Activated T-helper 1 cell treated with anti-CD3 and anti-CD28 coated beads, Interleukin-12 subunit alpha, Interleukin-12 subunit beta, Interleukin-2, Interleukin-4 antibody, amounts not matched to agents 30 ng/mL and 10 ng/mL and 1 ng/mL, durations not matched to agents 14 hours and 24 hours and 36 hours (primary cell): ENCODE measurements at regions of chr16 and their contacts with region 1.

Region 1: GRCh38 chr16:80580109-80580832 is 39.5 kb downstream of the DYNLRB2 start:
- DNase-seq: peak; percentile 82
- H3K4me3 Mint-ChIP-seq: peak overlapping the region; percentile 81
- H3K27ac Mint-ChIP-seq: peak overlapping the region; percentile 100
- H3K4me1 Mint-ChIP-seq: peaks cover 55% of the 10 kb centered on the region
- H3K27me3 Mint-ChIP-seq: no peaks in the 10 kb centered on the region

Region 2: DNA sequence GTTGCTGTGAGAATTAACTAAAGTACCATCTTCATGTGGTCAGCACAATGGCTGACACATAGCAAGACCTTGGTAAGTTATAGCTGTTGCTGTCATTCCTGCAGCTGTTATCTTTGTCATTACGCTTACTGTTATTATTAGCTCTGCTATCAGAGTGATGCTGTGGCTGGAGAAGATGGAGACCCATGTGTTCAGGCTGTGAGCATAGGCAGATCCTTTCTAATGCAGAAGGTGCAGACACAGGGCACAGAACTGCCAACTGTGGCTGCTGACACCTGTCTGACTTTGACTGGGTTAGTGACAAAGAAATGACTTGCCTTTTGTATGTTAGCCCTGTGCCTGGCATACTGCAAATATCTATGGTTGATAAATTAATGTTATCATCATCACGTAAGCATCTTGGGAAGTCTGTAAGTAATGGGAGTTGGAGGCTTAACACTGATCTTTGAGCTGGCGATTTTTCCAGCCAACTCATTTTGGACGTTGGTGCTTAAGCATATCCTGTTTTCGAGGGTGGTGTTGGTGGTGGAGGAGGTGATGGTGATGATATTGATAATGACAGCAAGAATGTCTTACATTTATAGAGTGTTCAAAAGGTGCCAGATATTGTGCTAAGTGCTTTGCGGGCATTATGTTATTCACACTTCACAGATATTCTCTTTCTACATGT is 1785.6 kb before region 1 on chr16:
- intact Hi-C with region 1: loop called (anchors 5 kb)
- DNase-seq: no peak
- H3K4me3 Mint-ChIP-seq: no peak overlapping the region
- H3K27ac Mint-ChIP-seq: peak overlapping the region; percentile 77
- H3K4me1 Mint-ChIP-seq: peaks cover 35% of the 10 kb centered on the region
- H3K27me3 Mint-ChIP-seq: no peaks in the 10 kb centered on the region

Region 3: GRCh38 chr16:79316004-79316458 is 1264.2 kb before region 1 on chr16:
- intact Hi-C with region 1: loop called (anchors 5 kb)
- DNase-seq: peak; percentile 54
- H3K4me3 Mint-ChIP-seq: peak overlapping the region; percentile 64
- H3K27ac Mint-ChIP-seq: peak overlapping the region; percentile 90
- H3K4me1 Mint-ChIP-seq: peaks cover 29% of the 10 kb centered on the region
- H3K27me3 Mint-ChIP-seq: peaks cover 10% of the 10 kb centered on the region

Region 4: GRCh38 chr16:80591071-80591915 is 11.0 kb after region 1 on chr16:
- intact Hi-C with region 1: loop called (anchors 1 kb)
- DNase-seq: peak; percentile 53
- H3K4me3 Mint-ChIP-seq: peak overlapping the region; percentile 17
- H3K27ac Mint-ChIP-seq: peak overlapping the region; percentile 76
- H3K4me1 Mint-ChIP-seq: peaks cover 66% of the 10 kb centered on the region
- H3K27me3 Mint-ChIP-seq: no peaks in the 10 kb centered on the region

Region 5: GRCh38 chr16:80693553-80693952 is 113.3 kb after region 1 on chr16:
- intact Hi-C with region 1: loop called (anchors 1 kb)
- DNase-seq: no peak
- H3K4me3 Mint-ChIP-seq: no peak overlapping the region
- H3K27ac Mint-ChIP-seq: peak overlapping the region; percentile 71
- H3K4me1 Mint-ChIP-seq: peaks cover 83% of the 10 kb centered on the region
- H3K27me3 Mint-ChIP-seq: peaks cover 1% of the 10 kb centered on the region

Region 6: GRCh38 chr16:80824718-80825364 is 244.6 kb after region 1 on chr16:
- intact Hi-C with region 1: loop called (anchors 5 kb)
- DNase-seq: no peak
- H3K4me3 Mint-ChIP-seq: no peak overlapping the region
- H3K27ac Mint-ChIP-seq: no peak overlapping the region
- H3K4me1 Mint-ChIP-seq: peaks cover 7% of the 10 kb centered on the region
- H3K27me3 Mint-ChIP-seq: peaks cover 15% of the 10 kb centered on the region

Region 7: DNA sequence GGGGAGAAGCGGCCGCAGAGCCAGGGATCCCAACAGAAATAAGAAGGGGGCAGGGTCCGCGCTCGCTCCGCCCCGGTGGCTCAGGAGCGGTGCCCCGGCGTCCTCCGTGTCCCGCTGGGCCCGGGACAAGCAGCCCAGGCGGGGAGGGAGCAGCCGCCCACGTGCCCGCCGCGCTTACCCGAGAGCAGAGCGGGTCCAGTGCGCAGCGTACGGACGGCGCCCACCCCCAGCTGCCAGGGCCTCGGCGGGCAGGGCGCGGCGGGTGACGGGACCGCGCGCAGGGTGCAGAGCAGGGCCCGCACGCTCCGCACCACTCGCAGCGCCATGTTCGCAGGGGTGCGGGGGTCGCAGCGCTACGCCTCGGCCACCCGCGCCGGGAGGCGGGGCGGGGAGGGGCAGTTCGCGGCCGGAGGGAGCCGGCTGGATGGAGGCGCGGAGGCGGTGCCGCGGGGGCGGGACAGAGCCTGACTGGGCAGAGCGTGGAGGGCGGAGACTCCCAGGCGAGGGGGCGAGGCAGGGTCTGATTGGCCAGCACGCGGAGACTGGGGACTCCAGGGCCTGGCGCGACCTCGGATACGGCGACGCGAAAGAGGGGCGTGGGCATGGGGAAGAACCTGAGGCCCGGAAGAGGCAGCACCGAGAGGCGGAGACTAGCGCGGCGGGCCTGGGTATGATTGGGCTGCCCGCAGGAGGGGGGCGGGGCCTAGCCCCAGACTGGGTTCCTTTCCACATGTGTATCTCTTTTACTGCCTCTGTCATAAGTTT is 515.9 kb after region 1 on chr16 and contains the start of gene GCSH:
- intact Hi-C with region 1: loop called (anchors 2 kb)
- DNase-seq: peak; percentile 99
- H3K4me3 Mint-ChIP-seq: peak within 1 kb of the TSS; percentile 81
- H3K27ac Mint-ChIP-seq: peak within 1 kb of the TSS; percentile 46
- H3K4me1 Mint-ChIP-seq: peaks cover 6% of the 10 kb centered on the region
- H3K27me3 Mint-ChIP-seq: peaks cover 3% of the 10 kb centered on the region
- total RNA-seq, gene GCSH: 16.5 and 19.1 TPM in 2 replicates